AG04450 (cell line): ENCODE measurements at regions of chr19 and their contacts with region 1.

Region 1: GRCh38 chr19:33430674-33431277 is 57.3 kb downstream of the CEBPG start:
- DNase-seq: peak; percentile 34
- H3K4me3 ChIP-seq: no peak overlapping the region
- H3K27ac ChIP-seq: no peak overlapping the region
- H3K27me3 ChIP-seq: no peaks in the 10 kb centered on the region
- CTCF ChIP-seq: peak; percentile 82

Region 2: GRCh38 chr19:33368074-33368864 is 62.5 kb before region 1 on chr19:
- CTCF ChIA-PET with region 1: no interaction called
- POLR2A ChIA-PET with region 1: no interaction called
- DNase-seq: no peak
- H3K4me3 ChIP-seq: no peak overlapping the region
- H3K27ac ChIP-seq: no peak overlapping the region
- H3K27me3 ChIP-seq: peaks cover 21% of the 10 kb centered on the region
- CTCF ChIP-seq: no peak

Region 3: DNA sequence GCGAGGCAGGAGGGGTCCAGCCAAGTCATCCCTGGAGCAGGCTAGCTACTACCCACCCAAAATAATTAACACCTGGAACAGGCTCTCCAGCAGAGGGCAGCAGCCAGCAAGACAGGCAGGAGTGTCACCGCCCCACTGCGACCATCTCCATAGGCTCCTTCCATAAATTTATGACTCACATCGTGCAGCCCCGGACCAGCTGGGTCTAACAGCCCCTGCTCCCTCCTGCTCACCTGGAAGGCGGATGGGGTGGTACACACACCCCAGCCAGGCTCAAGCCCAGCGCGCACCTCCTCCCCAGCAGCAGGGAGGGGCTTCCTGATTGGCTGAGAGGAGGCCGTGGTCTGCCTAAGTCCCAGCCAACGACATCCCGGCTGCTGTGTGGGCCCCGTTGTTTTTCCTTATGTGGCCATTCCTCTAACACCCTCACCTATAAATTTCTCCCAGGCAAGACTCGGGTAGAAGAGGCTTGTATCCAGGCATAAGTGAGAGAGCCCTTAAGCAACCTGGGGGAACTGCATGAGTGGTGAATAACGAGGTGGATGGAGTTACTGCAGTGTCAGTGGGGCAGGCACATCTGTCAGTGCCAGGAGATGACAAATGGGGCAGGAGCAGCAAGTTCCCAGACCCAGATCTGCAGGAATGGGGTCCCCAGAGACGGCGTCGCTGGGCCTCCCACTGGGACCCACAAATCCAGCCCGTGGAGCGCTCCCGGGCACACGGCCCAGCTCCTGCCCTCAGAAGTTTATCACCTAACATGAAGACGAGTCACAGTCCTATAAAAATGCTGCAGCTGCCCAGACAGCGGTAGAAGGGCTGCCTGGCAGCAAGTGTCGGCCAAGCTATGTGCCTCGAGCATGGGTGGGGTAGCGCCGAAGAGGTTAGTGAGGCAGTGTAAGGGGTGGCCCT is 14.2 kb before region 1 on chr19:
- CTCF ChIA-PET with region 1: interaction called, 55 read pairs
- POLR2A ChIA-PET with region 1: no interaction called
- DNase-seq: no peak
- H3K4me3 ChIP-seq: no peak overlapping the region
- H3K27ac ChIP-seq: no peak overlapping the region
- H3K27me3 ChIP-seq: no peaks in the 10 kb centered on the region
- CTCF ChIP-seq: peak; percentile 67

Region 4: GRCh38 chr19:33453265-33453664 is 22.5 kb after region 1 on chr19:
- CTCF ChIA-PET with region 1: interaction called, 14 read pairs
- POLR2A ChIA-PET with region 1: no interaction called
- DNase-seq: no peak
- H3K4me3 ChIP-seq: no peak overlapping the region
- H3K27ac ChIP-seq: no peak overlapping the region
- H3K27me3 ChIP-seq: no peaks in the 10 kb centered on the region
- CTCF ChIP-seq: no peak

Region 5: GRCh38 chr19:33521480-33522370 is 90.9 kb after region 1 on chr19 and contains the start of gene PEPD:
- CTCF ChIA-PET with region 1: interaction called, 11 read pairs
- POLR2A ChIA-PET with region 1: no interaction called
- DNase-seq: peak; percentile 80
- H3K4me3 ChIP-seq: peak within 1 kb of the TSS; percentile 86
- H3K27ac ChIP-seq: peak within 1 kb of the TSS; percentile 2
- H3K27me3 ChIP-seq: peaks cover 3% of the 10 kb centered on the region
- CTCF ChIP-seq: no peak
- polyA plus RNA-seq, gene PEPD: 67.1 and 92.6 TPM in 2 replicates

Region 6: DNA sequence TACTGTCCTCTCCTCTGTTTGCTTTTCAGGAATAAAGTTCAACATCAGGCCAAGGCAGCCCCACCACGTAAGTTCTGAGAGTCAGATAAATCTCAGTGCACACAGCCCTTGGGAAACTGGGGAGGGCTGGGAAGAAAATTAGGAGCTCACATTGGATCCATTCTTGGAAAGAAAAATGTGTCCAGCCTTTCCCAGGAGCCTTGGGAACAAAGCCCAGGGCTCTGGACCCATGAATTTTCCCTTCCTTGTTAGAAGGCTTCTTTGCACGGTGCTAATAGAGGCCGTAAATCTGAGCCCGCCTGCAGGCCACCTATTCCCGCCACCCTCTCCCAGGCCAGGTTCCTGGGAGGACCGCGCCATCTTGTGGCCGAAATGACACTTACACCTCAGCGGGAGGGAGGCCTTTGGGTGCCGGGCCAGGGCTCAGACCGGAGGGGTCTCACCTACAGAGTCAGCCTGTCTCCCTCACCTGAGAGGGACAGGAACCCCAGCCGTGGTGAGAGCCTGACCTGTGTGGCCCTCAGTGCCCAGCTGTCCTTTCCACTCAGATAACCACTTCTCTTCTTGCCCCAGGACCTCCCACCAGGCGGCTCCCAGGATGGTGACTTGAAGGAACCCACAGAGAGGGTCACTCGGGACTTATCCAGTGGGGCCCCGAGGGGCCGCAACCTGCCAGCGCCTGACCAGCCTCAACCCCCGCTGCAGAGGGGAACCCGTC is 340.8 kb after region 1 on chr19:
- CTCF ChIA-PET with region 1: interaction called, 87 read pairs
- POLR2A ChIA-PET with region 1: no interaction called
- DNase-seq: peak; percentile 18
- H3K4me3 ChIP-seq: no peak overlapping the region
- H3K27ac ChIP-seq: peak overlapping the region; percentile 2
- H3K27me3 ChIP-seq: peaks cover 9% of the 10 kb centered on the region
- CTCF ChIP-seq: peak; percentile 84